Heart left ventricle (tissue), 16 donors: ENCODE measurements at regions of chr12 and their contacts with region 1.

Region 1: GRCh38 chr12:76519538-76519937 is 40.0 kb downstream of the OSBPL8 start:
- DNase-seq: no peak
- ATAC-seq: no peak
- H3K4me3 ChIP-seq: no peak overlapping the region
- H3K27ac ChIP-seq: no peak overlapping the region
- H3K4me1 ChIP-seq: peaks cover 0 to 17% (median 0%) of the 10 kb centered on the region in 12 donors
- H3K27me3 ChIP-seq: no peaks in the 10 kb centered on the region
- CTCF ChIP-seq: no peak
- POLR2A ChIP-seq: no peak

Region 2: DNA sequence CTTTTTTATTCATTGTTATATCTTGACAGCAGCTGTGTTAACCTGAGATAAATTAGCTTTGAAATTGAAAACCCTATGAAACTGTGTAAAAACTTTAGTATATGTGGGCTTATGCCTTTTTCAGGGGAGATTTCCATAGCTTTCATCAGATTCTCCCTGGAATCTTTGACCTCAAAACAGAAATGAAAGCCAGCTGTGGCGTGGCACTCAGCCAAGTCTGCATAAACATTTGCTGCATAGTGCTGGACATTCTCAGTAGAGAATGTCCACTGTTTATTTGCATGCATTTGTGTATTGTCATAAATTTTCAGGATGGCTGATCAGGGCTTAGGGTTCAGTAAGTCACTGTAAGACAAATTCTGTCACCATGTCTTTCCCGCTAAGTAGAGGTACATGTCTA is 319.7 kb before region 1 on chr12:
- intact Hi-C with region 1: no loop called
- DNase-seq: no peak
- ATAC-seq: no peak
- H3K4me3 ChIP-seq: no peak overlapping the region
- H3K27ac ChIP-seq: no peak overlapping the region
- H3K4me1 ChIP-seq: no peaks in the 10 kb centered on the region
- H3K27me3 ChIP-seq: no peaks in the 10 kb centered on the region
- CTCF ChIP-seq: no peak
- POLR2A ChIP-seq: no peak

Region 3: GRCh38 chr12:76470028-76470939 is 49.3 kb before region 1 on chr12:
- intact Hi-C with region 1: no loop called
- DNase-seq: peak in 2 of 5 donors; percentile 34 to 35
- ATAC-seq: peak; percentile 97 to 98 (median 98)
- H3K4me3 ChIP-seq: no peak overlapping the region
- H3K27ac ChIP-seq: peak overlapping the region; percentile 28 to 88 (median 76)
- H3K4me1 ChIP-seq: peaks cover 0 to 46% (median 22%) of the 10 kb centered on the region in 12 donors
- H3K27me3 ChIP-seq: no peaks in the 10 kb centered on the region
- CTCF ChIP-seq: no peak
- POLR2A ChIP-seq: no peak

Region 4: GRCh38 chr12:76489737-76490136 is 29.8 kb before region 1 on chr12:
- intact Hi-C with region 1: loop called in 1 of 10 experiments (anchors 2 kb)
- DNase-seq: no peak
- ATAC-seq: no peak
- H3K4me3 ChIP-seq: no peak overlapping the region
- H3K27ac ChIP-seq: no peak overlapping the region
- H3K4me1 ChIP-seq: peaks cover 0 to 5% (median 0%) of the 10 kb centered on the region in 12 donors
- H3K27me3 ChIP-seq: no peaks in the 10 kb centered on the region
- CTCF ChIP-seq: no peak
- POLR2A ChIP-seq: no peak